ENCODE measurements at regions of chr17 and their contacts with region 1.

Region 1: GRCh38 chr17:32495359-32496231 is 8.8 kb downstream of the CDK5R1 start:
- DNase-seq: peak in 1 of 2 donors; percentile 80
- H3K4me3 ChIP-seq: no peak overlapping the region
- H3K27ac ChIP-seq: no peak overlapping the region
- H3K4me1 ChIP-seq: peaks cover 0 to 37% (median 8%) of the 10 kb centered on the region in 4 donors
- H3K27me3 ChIP-seq: no peaks in the 10 kb centered on the region
- CTCF ChIP-seq: no peak
- EP300 ChIP-seq: no peak
- POLR2A ChIP-seq: no peak

Region 2: DNA sequence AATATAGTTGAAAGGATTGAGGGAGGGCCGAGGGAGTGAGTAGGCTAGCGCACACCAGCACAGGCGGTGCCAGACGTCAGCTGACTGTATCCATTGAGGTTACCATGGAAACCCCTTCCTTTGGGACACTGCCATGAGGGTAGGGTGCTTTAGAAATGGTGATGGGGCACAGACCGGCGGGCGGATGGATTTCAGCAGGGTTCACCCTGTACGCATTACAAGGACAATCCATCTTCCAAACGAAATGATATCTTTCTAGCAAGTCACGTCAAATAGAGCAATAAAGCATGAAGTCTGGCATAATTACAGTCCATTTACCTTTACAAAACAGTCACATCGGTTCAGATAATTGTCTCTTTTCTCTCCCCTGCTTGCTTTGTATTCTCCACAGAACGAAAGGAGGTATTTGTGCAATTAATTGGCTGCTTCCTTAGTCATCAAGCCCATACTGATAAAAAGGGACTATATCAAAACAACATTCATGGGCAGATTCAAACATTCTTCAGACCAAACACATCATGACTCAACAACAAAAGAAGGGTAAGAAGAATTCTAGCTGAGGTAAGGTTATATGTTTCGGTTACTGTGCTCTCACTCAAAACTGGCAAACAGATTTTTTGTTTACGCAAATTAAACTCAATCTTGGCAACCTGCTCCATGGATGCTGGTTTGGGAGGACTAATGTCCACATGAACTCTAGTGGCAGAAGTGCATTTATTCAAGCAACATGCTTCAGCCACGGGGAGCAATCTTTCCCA is 131.8 kb after region 1 on chr17:
- intact Hi-C with region 1: no loop called
- DNase-seq: peak in 1 of 2 donors; percentile 71
- H3K4me3 ChIP-seq: no peak overlapping the region
- H3K27ac ChIP-seq: no peak overlapping the region
- H3K4me1 ChIP-seq: peaks cover 0 to 11% (median 0%) of the 10 kb centered on the region in 4 donors
- H3K27me3 ChIP-seq: no peaks in the 10 kb centered on the region
- CTCF ChIP-seq: no peak
- EP300 ChIP-seq: no peak
- POLR2A ChIP-seq: no peak

Region 3: DNA sequence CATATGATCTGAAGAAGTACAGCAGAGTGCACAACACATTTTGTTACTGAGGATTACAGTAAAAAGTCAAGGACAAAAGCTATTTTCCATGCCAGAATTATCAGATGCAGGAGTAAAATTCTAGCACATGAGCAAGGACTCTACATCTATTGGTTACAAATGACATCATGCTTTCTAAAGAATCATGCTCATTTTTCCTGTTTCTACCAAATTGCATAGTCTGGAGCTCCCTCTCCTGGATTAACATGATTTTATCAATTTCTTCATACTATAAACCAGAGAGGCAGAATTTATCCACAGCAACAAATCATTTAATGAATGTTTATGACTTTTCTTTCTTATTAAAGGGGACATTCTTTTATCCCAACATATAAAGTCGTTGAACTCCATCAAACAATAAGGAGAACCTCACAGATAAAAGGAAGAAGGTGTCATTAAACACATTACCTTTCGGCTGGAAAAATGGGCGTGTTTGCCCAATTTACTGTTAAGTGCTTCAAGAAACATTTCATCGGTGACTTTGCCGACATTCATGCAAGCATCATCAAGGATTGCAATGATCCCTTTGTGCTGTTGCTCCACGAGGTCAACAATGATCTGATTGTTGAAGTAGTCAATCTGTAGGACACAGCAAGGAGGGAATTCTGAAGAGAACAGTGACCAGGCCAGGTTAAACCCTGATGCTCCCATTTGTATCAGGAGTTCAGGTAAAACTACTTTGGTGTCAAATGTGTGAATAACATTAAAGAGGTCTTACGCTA is 259.6 kb after region 1 on chr17:
- intact Hi-C with region 1: loop called (anchors 10 kb)
- DNase-seq: peak in 1 of 2 donors; percentile 85
- H3K4me3 ChIP-seq: no peak overlapping the region
- H3K27ac ChIP-seq: no peak overlapping the region
- H3K4me1 ChIP-seq: peaks cover 0 to 9% (median 0%) of the 10 kb centered on the region in 4 donors
- H3K27me3 ChIP-seq: no peaks in the 10 kb centered on the region
- CTCF ChIP-seq: peak in 2 of 7 experiments; percentile 30 to 50
- EP300 ChIP-seq: no peak
- POLR2A ChIP-seq: no peak

Measured in stomach (tissue), 19 donors.